A673 (cell line): ENCODE measurements at regions of chr7 and their contacts with region 1.

Region 1: DNA sequence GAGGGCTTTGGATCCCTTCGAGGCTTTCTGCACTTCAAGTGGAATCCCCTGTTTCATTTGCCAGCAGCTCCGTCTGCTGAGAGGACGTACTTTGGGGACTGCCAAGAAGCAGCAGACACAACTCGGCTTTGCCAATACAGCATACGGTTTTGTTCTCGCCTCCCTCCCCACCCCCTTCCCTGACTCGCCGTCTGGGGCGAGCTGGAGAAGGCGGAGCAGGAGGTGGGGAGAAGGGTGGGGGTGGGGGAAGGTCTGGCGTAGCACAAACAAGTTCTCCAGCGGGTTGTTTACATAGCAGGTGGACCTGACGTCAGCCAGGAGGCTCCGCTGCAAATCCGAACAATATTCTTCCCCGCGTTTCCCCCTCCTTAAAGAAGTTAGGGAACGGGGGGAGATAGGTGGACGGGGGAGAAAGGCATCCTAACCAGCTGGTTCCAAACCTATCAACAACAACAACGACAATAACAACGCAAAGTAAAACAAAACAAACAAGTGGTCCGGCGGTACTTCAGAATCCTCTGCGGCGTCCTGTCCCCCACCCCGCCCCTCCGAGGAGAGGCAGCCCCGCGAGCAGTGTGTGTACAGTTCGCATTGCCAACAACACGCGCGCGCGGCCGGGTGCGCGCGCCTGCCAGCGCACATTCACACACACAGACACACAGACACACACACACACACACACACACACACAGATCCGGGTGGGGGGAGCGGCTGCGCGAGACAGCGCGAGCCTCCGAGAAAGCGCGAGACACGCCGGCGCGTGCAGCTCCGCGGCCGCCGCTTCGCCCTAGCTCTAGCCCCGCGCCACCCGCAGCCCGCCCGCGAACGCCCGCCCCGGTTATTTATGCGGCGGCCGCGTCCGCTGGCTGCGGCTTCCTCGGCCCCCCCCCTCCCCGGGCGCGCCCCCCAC is 167.0 kb upstream of the PPP1R3A start:
- DNase-seq: peak; percentile 73
- H3K4me3 ChIP-seq: peak overlapping the region; percentile 52
- H3K27ac ChIP-seq: no peak overlapping the region
- H3K4me1 ChIP-seq: peaks cover 13% of the 10 kb centered on the region
- H3K27me3 ChIP-seq: peaks cover 99% of the 10 kb centered on the region
- CTCF ChIP-seq: no peak

Region 2: DNA sequence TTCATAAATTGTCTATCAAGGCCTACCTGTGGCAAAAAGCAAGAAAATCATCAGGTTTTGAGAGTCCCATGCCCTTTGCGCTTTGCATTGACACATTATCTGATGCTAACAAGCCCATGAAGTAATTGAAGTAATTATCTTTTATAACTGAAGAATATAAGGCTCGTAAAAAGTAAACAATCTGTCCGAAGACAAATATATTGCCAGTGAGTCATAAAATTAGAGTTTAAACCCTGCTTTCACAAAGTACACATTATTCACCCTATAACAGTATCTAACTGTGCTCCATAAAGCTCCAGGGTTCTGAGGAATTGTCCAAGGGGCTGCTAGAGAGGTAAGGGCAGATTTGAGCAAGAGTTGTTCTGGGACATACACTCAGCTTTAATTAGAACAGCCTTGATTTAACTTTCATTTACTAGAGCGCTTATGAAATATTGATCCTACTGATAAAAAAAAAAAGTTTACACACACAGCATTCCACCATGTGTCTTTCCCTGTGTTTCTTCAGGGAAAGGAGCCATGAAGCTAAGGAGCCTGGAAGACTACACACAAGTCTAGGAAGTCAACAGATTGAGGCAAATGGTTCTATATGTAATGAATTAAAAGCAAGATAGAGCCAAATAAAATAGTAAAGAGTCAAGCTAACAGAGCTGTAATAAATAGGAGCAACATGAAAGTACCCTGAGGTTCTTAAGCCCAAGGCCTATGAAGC is 64.6 kb before region 1 on chr7:
- CTCF ChIA-PET with region 1: no interaction called
- POLR2A ChIA-PET with region 1: no interaction called
- intact Hi-C with region 1: no loop called
- DNase-seq: no peak
- H3K4me3 ChIP-seq: no peak overlapping the region
- H3K27ac ChIP-seq: no peak overlapping the region
- H3K4me1 ChIP-seq: no peaks in the 10 kb centered on the region
- H3K27me3 ChIP-seq: peaks cover 44% of the 10 kb centered on the region
- CTCF ChIP-seq: no peak

Region 3: GRCh38 chr7:114298011-114298410 is 212.2 kb after region 1 on chr7:
- CTCF ChIA-PET with region 1: no interaction called
- POLR2A ChIA-PET with region 1: no interaction called
- intact Hi-C with region 1: no loop called
- DNase-seq: no peak
- H3K4me3 ChIP-seq: no peak overlapping the region
- H3K27ac ChIP-seq: no peak overlapping the region
- H3K4me1 ChIP-seq: no peaks in the 10 kb centered on the region
- H3K27me3 ChIP-seq: peaks cover 10% of the 10 kb centered on the region
- CTCF ChIP-seq: no peak

Region 4: GRCh38 chr7:114310345-114311110 is 224.7 kb after region 1 on chr7:
- CTCF ChIA-PET with region 1: no interaction called
- POLR2A ChIA-PET with region 1: no interaction called
- intact Hi-C with region 1: no loop called
- DNase-seq: no peak
- H3K4me3 ChIP-seq: no peak overlapping the region
- H3K27ac ChIP-seq: no peak overlapping the region
- H3K4me1 ChIP-seq: no peaks in the 10 kb centered on the region
- H3K27me3 ChIP-seq: no peaks in the 10 kb centered on the region
- CTCF ChIP-seq: 0 out of 2 replicates have a peak, but pooled peaks have one; percentile 17

Region 5: GRCh38 chr7:114405427-114405826 is 319.6 kb after region 1 on chr7:
- CTCF ChIA-PET with region 1: no interaction called
- POLR2A ChIA-PET with region 1: no interaction called
- intact Hi-C with region 1: loop called (anchors 5 kb)
- DNase-seq: peak; percentile 15
- H3K4me3 ChIP-seq: no peak overlapping the region
- H3K27ac ChIP-seq: no peak overlapping the region
- H3K4me1 ChIP-seq: no peaks in the 10 kb centered on the region
- H3K27me3 ChIP-seq: peaks cover 40% of the 10 kb centered on the region
- CTCF ChIP-seq: peak; percentile 56

Region 6: DNA sequence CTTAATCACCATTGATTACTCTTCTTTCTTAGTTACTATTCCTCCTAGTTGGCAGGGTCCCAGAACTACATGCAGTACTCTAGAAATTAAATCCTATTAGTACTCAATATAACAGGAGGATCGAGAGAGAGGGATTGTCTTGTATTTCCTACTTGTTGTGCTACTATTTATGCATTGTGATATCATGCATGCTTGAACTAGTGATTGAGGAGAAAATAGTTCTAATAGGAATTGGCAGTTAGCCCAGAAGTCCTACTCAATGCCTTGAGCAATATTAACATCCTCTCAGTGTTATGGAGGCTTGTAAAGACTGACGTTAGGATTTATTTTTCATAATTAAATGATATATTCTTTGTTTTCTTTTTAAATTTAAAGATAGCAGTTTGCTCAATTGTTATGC is 396.1 kb after region 1 on chr7:
- CTCF ChIA-PET with region 1: no interaction called
- POLR2A ChIA-PET with region 1: no interaction called
- intact Hi-C with region 1: no loop called
- DNase-seq: peak; percentile 64
- H3K4me3 ChIP-seq: no peak overlapping the region
- H3K27ac ChIP-seq: no peak overlapping the region
- H3K4me1 ChIP-seq: no peaks in the 10 kb centered on the region
- H3K27me3 ChIP-seq: peaks cover 14% of the 10 kb centered on the region
- CTCF ChIP-seq: no peak

Region 7: DNA sequence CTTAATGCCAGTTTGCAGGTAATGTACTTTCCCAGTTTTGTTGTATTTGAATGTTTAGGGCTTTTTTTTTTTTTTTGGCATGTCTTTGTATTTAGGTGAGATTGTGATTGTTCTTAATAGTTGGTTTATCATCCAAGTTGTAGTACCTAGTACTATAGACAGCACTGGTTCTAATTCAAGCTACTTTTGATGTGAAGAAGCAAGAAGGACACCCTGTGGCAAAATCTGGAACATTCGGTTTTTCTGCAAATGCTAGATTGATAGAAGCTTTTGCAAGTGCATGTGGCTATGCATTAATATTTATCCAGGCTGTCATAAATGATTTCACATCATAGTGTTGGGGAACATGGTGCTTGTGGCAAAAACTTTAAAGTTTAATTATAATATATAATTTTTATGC is 577.7 kb after region 1 on chr7:
- CTCF ChIA-PET with region 1: interaction called, 13 read pairs
- POLR2A ChIA-PET with region 1: no interaction called
- intact Hi-C with region 1: loop called (anchors 5 kb)
- DNase-seq: peak; percentile 35
- H3K4me3 ChIP-seq: no peak overlapping the region
- H3K27ac ChIP-seq: no peak overlapping the region
- H3K4me1 ChIP-seq: peaks cover 5% of the 10 kb centered on the region
- H3K27me3 ChIP-seq: no peaks in the 10 kb centered on the region
- CTCF ChIP-seq: peak; percentile 52

Region 8: DNA sequence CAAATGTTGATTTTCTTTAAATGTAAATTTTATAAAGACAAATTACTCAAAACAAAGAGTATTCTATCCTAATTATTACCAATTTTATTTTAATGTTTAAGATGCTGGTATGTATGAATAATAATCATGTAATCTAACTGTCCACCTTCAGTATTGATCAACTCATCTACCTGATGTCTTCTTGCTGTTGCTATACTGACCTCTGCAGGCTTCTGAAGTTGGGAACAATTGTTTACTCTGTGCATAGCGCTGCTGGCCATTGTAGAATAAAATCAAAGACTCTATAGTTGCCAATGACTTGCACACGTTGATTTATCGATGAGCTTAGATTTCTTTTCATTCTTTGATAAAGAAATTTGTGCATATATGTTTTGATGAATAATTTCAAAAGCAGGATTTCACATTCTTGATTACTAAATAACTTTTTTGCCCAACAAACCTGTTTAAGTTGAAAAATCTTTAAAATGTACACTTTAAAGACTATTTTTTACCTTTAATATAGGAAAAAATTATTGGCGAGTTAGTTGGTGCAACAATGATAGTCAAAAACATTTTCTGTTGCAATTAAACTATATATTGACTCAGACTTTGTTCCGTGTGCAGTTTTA is 1662.4 kb after region 1 on chr7:
- CTCF ChIA-PET with region 1: no interaction called
- POLR2A ChIA-PET with region 1: no interaction called
- intact Hi-C with region 1: loop called (anchors 10 kb)
- DNase-seq: peak; percentile 24
- H3K4me3 ChIP-seq: no peak overlapping the region
- H3K27ac ChIP-seq: no peak overlapping the region
- H3K4me1 ChIP-seq: no peaks in the 10 kb centered on the region
- H3K27me3 ChIP-seq: no peaks in the 10 kb centered on the region
- CTCF ChIP-seq: peak; percentile 58

Region 9: DNA sequence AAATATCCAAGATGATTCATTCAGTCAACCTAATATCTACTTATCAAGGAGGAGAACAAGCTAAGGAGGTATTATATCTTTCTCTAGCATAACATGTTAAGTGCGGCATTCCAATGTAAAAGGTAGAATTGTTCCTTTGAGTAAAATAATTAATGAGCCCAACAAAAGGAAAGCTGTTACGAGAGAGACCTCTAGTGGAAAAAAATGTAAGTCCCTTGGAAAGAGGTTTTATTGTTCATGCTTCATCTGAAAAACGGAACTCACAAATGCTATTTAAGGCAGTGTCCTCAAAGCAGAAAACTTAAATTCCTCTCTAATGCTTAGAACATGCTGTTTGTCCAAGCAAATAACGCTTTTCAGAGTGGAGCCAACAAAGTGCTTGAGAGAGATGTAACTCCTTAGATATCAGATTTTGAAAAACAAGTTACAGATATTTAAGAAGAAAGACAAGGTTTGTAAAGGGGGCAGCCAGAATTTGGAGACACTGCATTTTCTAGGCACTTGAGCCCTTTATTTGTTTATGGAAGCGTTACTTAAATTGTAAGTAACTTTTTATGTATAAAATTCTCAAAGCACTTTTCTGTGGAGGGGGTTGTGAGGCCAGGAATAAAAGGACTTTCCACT is 1824.8 kb after region 1 on chr7:
- CTCF ChIA-PET with region 1: no interaction called
- POLR2A ChIA-PET with region 1: no interaction called
- intact Hi-C with region 1: loop called (anchors 10 kb)
- DNase-seq: peak; percentile 71
- H3K4me3 ChIP-seq: no peak overlapping the region
- H3K27ac ChIP-seq: no peak overlapping the region
- H3K4me1 ChIP-seq: no peaks in the 10 kb centered on the region
- H3K27me3 ChIP-seq: peaks cover 68% of the 10 kb centered on the region
- CTCF ChIP-seq: peak; percentile 75